Esophagus squamous epithelium (tissue), 5 donors: ENCODE measurements at regions of chr5 and their contacts with region 1.

Region 1: DNA sequence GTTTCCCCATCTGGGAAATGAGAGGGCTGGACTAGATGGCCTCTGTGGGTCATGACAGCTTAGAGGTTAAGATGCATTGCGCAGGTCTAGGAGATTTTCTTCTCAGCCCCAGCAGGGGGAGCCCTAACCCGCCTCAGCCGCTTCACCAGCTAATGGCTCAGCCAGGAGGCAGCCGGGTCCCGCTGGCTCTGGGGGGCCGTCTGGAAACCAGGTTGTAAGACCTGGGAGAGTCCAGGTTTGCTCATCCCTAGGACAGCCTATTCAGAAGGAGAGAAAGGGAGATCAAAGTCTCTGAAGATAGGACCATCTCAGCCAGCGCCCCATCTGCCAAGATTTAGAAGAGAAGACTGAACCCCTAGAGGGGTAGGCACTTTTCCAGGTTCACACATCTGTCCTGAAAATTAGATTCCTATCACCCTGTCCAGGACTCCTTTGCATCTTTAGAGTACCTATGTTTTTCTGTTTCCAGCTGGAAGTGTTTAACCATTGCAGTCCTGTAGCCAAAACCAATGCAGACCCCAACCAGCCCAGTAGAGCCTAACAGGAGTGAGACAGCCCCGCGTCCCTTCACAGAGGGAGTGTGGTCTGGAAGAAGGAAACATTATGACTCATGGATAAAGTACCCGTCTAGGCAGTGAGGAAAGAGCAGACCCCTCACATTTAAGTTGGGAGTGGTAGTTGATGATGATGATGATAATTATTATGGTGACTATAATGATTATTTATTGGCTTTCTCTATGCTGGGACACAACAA is 27.5 kb downstream of the SPARC start:
- DNase-seq: peak; percentile 5
- H3K4me3 ChIP-seq: no peak overlapping the region
- H3K27ac ChIP-seq: no peak overlapping the region
- H3K4me1 ChIP-seq: peaks cover 10 to 54% (median 10%) of the 10 kb centered on the region in 3 donors
- H3K27me3 ChIP-seq: no peaks in the 10 kb centered on the region
- CTCF ChIP-seq: peak; percentile 65 to 91 (median 85)
- POLR2A ChIP-seq: no peak

Region 2: DNA sequence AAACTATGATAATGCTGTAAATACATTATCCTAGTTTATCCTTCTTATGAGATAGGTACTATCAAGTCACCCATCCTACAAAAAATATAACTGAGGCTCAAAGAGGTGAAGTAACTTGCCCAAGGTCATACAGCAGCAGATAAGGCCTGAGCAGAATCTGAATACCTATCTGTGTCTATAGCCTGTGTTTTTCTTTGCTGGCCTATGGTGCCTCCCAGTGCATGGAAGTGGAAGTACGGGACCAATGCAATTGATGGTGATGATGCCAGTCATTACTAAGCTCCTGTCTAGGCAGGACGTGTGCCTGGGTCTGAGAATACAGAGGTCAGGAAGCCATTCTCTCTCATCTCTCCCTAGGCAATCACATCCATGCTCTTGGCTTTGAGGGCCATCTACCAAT is 135.8 kb before region 1 on chr5:
- intact Hi-C with region 1: loop called (anchors 10 kb)
- DNase-seq: no peak
- H3K4me3 ChIP-seq: no peak overlapping the region
- H3K27ac ChIP-seq: no peak overlapping the region
- H3K4me1 ChIP-seq: no peaks in the 10 kb centered on the region
- H3K27me3 ChIP-seq: no peaks in the 10 kb centered on the region
- CTCF ChIP-seq: peak in 4 of 6 experiments; percentile 22 to 67 (median 28)
- POLR2A ChIP-seq: no peak

Region 3: DNA sequence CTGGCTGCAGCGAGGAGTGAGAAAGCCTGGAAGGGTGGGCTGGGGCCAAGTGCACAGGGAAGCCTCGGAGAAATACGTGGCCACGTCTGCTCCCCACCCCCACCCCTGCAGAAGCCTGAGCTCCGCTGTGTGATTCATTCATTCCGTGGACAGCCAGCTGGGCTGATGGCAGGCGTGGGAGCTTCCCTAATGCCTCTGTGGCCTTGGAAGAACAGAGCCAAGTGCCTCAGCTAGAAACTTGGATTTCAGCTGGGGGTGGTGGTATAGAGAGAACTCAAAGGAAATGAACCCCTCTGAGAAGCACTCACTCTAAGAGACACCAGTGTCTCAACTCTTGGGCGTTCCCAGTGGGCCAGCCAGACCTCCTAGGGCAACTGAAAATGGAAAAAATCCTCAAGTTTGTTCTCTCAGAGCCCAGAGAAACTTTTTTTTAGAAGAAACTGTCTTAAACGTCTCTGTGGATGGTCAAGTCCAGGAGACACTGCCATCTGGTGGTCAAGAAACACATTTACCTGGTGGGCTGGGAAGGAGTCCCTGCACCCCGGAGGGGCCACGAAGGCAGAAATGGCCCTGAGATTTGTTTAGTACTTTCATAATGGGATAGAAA is 81.3 kb after region 1 on chr5:
- intact Hi-C with region 1: loop called (anchors 5 kb)
- DNase-seq: no peak
- H3K4me3 ChIP-seq: peak overlapping the region in 1 of 4 donors; percentile 10
- H3K27ac ChIP-seq: peak overlapping the region; percentile 51 to 80 (median 68)
- H3K4me1 ChIP-seq: peaks cover 16 to 48% (median 28%) of the 10 kb centered on the region in 3 donors
- H3K27me3 ChIP-seq: no peaks in the 10 kb centered on the region
- CTCF ChIP-seq: peak; percentile 78 to 93 (median 88)
- POLR2A ChIP-seq: no peak

Region 4: GRCh38 chr5:151880324-151880723 is 221.1 kb after region 1 on chr5:
- intact Hi-C with region 1: no loop called
- DNase-seq: no peak
- H3K4me3 ChIP-seq: no peak overlapping the region
- H3K27ac ChIP-seq: no peak overlapping the region
- H3K4me1 ChIP-seq: no peaks in the 10 kb centered on the region
- H3K27me3 ChIP-seq: no peaks in the 10 kb centered on the region
- CTCF ChIP-seq: no peak
- POLR2A ChIP-seq: no peak